WTC11 (cell line): ENCODE measurements at regions of chr19 and their contacts with region 1.

Region 1: DNA sequence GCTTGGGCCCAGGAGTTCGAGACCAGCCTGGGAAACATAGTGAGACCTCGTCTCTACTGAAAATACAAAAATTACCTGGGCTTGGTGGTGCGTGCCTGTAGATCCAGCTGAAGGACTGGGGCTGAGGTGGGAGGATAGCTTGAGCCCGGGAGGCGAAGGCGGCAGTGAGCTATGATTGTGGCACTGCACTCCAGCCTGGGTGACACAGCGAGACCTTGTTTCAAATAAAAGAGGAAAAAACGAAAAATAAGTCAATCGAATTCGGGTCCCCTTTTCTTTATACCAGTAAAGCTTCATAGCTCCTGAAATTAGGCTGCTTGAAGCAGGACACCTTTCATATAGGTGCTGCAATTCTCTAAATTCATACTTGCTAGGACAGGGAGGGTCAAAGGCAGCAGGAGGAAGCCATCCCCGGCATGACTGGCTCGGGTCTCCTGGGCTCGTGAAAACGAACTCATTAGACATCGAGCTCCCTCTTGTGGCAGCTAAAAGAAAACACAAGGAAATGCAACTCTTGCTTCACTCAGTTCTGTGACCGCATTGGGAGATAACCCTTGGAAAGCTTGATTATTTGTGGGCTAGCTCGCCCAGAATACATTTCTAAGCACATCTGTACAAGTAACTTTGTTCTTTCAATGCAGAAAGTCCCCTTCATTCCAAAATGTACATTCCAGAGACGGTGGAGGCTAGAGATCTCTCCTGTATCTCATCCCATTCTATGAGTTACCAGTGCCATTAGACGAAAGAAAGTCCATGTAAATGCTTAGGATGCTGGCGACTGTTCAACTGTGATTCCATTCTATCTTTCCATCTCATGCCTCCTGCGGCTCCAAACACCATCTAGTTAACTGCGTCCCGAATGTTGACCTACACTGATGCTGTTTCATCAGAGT is 16.8 kb downstream of the FPR2 start:
- DNase-seq: peak; percentile 59
- ATAC-seq: peak; percentile 96
- H3K4me3 Mint-ChIP-seq: no peak overlapping the region
- H3K27ac Mint-ChIP-seq: no peak overlapping the region
- H3K4me1 Mint-ChIP-seq: peaks cover 8% of the 10 kb centered on the region
- H3K27me3 Mint-ChIP-seq: peaks cover 37% of the 10 kb centered on the region
- CTCF ChIP-seq: peak; percentile 63

Region 2: DNA sequence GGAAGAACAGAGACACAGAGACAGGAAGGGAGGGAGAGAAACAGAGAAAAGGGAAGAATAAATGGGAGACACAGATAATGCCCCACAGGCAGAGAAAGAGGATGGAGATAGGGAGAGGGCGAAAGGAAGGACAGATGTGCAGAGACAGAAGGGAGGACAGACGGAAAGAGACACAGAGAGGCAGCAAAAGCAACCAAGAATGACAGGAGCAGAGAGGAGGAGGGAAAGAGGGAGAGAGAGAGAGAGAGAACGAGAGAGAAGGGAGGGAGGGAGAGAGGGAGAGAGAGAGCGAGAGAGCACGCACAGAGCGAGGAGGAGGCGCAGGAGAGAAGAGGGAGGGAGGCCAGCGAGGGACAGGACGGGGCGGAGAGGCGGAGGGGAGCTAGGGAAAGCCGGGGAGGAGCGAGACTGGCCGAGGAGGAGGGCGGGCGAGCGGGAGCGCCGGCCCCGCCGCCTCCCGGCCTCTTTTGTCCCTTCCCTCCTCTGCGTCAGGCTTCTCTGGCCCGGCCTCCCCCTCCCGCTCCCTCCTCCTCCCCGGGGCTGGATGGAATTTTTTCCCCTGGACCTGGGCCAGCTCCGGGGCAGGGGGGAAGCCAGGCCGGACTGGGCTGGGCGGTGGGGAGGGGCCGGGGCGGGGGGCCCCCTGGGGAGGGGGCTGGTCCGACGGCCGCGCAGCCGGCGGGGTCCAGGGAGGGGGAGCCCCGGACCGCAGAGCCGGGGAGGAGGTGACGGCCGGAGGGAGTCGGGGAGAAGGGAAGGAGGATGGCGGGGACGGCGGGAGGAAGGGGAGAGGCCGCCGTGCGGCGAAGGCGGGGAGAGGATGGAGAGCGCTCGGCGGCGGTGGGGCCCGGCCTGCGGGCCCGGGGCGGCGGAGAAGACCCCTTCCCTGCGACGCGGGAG is 88.9 kb before region 1 on chr19:
- CTCF ChIA-PET with region 1: interaction called, 19 read pairs
- POLR2A ChIA-PET with region 1: no interaction called
- DNase-seq: peak; percentile 81
- ATAC-seq: peak; percentile 25
- H3K4me3 Mint-ChIP-seq: peak overlapping the region; percentile 86
- H3K27ac Mint-ChIP-seq: peak overlapping the region; percentile 73
- H3K4me1 Mint-ChIP-seq: peaks cover 40% of the 10 kb centered on the region
- H3K27me3 Mint-ChIP-seq: peaks cover 8% of the 10 kb centered on the region; the same call in 1 of the 2 replicates
- CTCF ChIP-seq: no peak

Region 3: DNA sequence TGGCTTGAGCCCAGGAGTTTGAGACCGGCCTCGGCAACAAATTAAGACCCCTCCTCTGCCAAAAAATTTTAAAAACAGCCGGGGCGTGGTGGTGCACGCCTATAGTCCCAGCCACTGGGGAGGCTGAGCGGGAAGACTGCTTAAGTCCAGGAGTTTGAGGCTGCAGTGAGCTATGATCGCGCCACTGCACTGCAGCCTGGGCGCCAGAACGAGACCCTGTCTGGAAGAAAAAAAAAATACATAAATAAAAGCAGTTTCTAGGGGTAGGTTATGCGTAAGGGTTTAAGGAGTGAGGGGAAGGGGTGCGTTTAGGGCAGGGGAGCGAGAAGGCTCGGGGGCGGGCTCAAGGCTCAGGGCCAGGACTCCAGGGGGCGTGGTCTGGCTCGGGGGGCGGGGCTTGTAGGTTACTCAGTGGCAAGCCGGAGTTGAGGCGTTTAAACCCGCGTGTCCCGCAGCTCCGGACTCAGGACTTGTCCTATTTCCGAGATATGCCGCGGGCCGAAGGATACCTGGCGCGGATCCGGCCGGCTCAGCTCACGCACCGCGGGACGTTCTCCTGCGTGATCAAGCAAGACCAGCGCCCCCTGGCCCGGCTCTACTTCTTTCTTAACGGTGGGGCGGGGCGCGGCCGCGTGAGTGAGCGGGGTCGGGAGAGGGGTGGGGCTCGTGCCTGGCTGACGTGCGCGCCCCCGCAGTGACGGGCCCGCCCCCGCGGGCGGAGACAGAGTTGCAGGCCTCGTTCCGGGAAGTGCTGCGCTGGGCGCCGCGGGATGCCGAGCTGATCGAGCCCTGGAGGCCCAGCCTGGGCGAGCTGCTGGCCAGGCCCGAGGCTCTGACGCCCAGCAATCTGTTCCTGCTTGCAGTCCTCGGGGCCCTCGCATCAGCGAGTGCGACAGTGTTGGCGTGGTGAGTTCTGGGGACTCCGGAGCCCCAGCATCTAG is 74.0 kb before region 1 on chr19:
- CTCF ChIA-PET with region 1: interaction called, 38 read pairs
- POLR2A ChIA-PET with region 1: interaction called, 4 read pairs
- DNase-seq: peak; percentile 97
- ATAC-seq: peak; percentile 54
- H3K4me3 Mint-ChIP-seq: peak overlapping the region; percentile 94
- H3K27ac Mint-ChIP-seq: no peak overlapping the region; the same call in 1 of the 2 replicates
- H3K4me1 Mint-ChIP-seq: peaks cover 29% of the 10 kb centered on the region
- H3K27me3 Mint-ChIP-seq: peaks cover 8% of the 10 kb centered on the region
- CTCF ChIP-seq: no peak

Region 4: GRCh38 chr19:51712460-51713083 is 65.2 kb before region 1 on chr19:
- CTCF ChIA-PET with region 1: interaction called, 46 read pairs
- POLR2A ChIA-PET with region 1: no interaction called
- DNase-seq: peak; percentile 66
- ATAC-seq: peak; percentile 92
- H3K4me3 Mint-ChIP-seq: no peak overlapping the region
- H3K27ac Mint-ChIP-seq: no peak overlapping the region
- H3K4me1 Mint-ChIP-seq: peaks cover 3% of the 10 kb centered on the region
- H3K27me3 Mint-ChIP-seq: peaks cover 61% of the 10 kb centered on the region
- CTCF ChIP-seq: peak; percentile 60

Region 5: DNA sequence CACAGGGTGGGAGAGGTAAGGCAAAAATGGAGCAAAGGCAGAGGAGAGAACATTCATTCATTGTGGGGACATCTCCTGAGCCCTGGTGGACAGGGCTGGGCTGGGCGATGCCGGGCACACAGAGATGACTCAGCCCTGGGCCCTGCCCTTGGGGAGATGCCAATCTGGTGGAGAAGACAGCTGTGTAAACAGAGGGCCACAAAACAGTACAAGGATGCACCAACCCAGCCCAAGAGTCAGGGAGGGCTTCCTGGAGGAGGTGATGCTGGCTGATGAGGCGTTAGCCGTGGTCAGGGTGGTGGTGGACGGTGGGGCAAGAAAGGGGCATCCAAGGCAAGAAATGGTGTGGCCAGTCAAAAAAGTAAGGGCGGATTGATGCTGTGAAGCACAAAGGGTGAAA is 50.4 kb before region 1 on chr19:
- CTCF ChIA-PET with region 1: interaction called, 17 read pairs
- POLR2A ChIA-PET with region 1: no interaction called
- DNase-seq: no peak
- ATAC-seq: no peak
- H3K4me3 Mint-ChIP-seq: no peak overlapping the region
- H3K27ac Mint-ChIP-seq: no peak overlapping the region
- H3K4me1 Mint-ChIP-seq: peaks cover 34% of the 10 kb centered on the region
- H3K27me3 Mint-ChIP-seq: peaks cover 29% of the 10 kb centered on the region
- CTCF ChIP-seq: no peak

Region 6: GRCh38 chr19:51742789-51743188 is 35.0 kb before region 1 on chr19:
- CTCF ChIA-PET with region 1: interaction called, 10 read pairs
- POLR2A ChIA-PET with region 1: no interaction called
- DNase-seq: no peak
- ATAC-seq: no peak
- H3K4me3 Mint-ChIP-seq: no peak overlapping the region
- H3K27ac Mint-ChIP-seq: no peak overlapping the region
- H3K4me1 Mint-ChIP-seq: peaks cover 2% of the 10 kb centered on the region; the same call in 1 of the 2 replicates
- H3K27me3 Mint-ChIP-seq: peaks cover 3% of the 10 kb centered on the region; the same call in 1 of the 2 replicates
- CTCF ChIP-seq: no peak

Region 7: GRCh38 chr19:51760697-51761356 is 17.0 kb before region 1 on chr19 and contains the start of gene FPR2:
- CTCF ChIA-PET with region 1: interaction called, 13 read pairs
- POLR2A ChIA-PET with region 1: no interaction called
- DNase-seq: no peak
- ATAC-seq: peak; percentile 59
- H3K4me3 Mint-ChIP-seq: no peak within 1 kb of the TSS
- H3K27ac Mint-ChIP-seq: no peak within 1 kb of the TSS
- H3K4me1 Mint-ChIP-seq: peaks cover 7% of the 10 kb centered on the region
- H3K27me3 Mint-ChIP-seq: peaks cover 4% of the 10 kb centered on the region
- CTCF ChIP-seq: no peak
- total RNA-seq, gene FPR2: 0.30 to 0.71 TPM (median 0.31 TPM) in 3 replicates

Region 8: GRCh38 chr19:51916167-51916566 is 138.4 kb after region 1 on chr19:
- CTCF ChIA-PET with region 1: no interaction called
- POLR2A ChIA-PET with region 1: no interaction called
- DNase-seq: no peak
- ATAC-seq: no peak
- H3K4me3 Mint-ChIP-seq: no peak overlapping the region
- H3K27ac Mint-ChIP-seq: no peak overlapping the region
- H3K4me1 Mint-ChIP-seq: no peaks in the 10 kb centered on the region
- H3K27me3 Mint-ChIP-seq: peaks cover 25% of the 10 kb centered on the region
- CTCF ChIP-seq: no peak